Dorsolateral prefrontal cortex (tissue), 120 donors: ENCODE measurements at regions of chr11 and their contacts with region 1.

Region 1: DNA sequence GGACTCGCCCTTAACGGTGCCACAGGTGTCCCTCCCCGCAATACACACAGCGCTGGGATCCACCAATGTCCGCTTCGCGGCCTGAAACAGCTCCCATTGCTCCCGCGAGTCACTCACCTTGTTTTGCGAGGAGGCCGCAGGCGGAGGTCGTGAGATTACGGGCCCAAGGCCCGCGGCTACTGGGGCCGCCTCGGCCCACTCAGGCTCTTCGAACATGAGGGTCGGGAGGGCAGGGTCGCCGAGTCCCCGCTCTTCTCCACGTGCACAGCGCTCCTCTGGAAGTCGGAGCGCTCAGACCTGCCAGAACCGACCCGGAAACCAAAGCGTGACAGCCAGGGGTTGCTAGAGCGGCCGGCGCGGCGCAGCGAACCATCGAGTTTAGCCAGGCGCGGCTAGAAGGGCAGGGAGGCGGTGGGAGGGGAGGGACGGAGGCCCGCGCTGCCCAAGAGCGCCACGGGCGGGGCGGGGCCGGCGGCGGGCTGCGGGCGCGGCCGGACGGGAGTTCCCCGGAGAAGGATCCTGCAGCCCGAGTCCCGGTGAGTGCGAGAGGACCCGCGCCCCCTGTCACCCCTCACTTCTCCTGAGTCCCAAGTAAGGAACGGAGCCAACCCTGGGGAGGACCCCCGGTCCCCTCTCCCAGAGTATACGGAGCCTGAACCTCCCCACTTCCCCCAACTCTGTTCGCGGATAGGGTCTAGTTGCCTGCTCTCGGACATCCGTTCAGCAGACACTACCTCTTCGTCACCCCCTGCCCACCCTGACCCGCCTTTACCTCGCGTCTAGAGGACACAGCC is at the starts of genes ILK and RRP8:
- DNase-seq: peak; percentile 82 to 94 (median 90)
- H3K4me3 ChIP-seq: peak within 1 kb of the TSS; percentile 63 to 99 (median 90)
- H3K27ac ChIP-seq: peak within 1 kb of the TSS; percentile 6 to 97 (median 91)
- H3K27me3 ChIP-seq: no peaks in the 10 kb centered on the region
- CTCF ChIP-seq: peak in 53 of 56 donors; percentile 11 to 73 (median 53)
- total RNA-seq, gene ILK: 60.0 to 125 (median 89.3) TPM
- total RNA-seq, gene RRP8: 17.7 to 34.3 (median 24.3) TPM

Region 2: GRCh38 chr11:6419009-6419631 is 184.4 kb before region 1 on chr11 and contains the start of gene APBB1:
- intact Hi-C with region 1: loop called in 1 of 2 experiments (anchors 10 kb)
- DNase-seq: peak in 7 of 10 donors; percentile 57 to 87 (median 67)
- H3K4me3 ChIP-seq: peak within 1 kb of the TSS; percentile 69 to 100 (median 93)
- H3K27ac ChIP-seq: peak within 1 kb of the TSS; percentile 91 to 100 (median 98)
- H3K27me3 ChIP-seq: no peaks in the 10 kb centered on the region
- CTCF ChIP-seq: peak in 39 of 56 donors; percentile 7 to 53 (median 27)
- total RNA-seq, gene APBB1: 235 to 475 (median 368) TPM

Region 3: GRCh38 chr11:6481012-6481923 is 122.2 kb before region 1 on chr11 and contains the starts of genes ARFIP2 and TIMM10B:
- intact Hi-C with region 1: loop called in 1 of 2 experiments (anchors 5 kb)
- DNase-seq: peak; percentile 99 to 100 (median 100)
- H3K4me3 ChIP-seq: peak within 1 kb of the TSS; percentile 61 to 99 (median 88)
- H3K27ac ChIP-seq: peak within 1 kb of the TSS; percentile 11 to 96 (median 87)
- H3K27me3 ChIP-seq: no peaks in the 10 kb centered on the region
- CTCF ChIP-seq: peak in 27 of 56 donors; percentile 8 to 49 (median 28)
- total RNA-seq, gene ARFIP2: 36.5 to 66.3 (median 51.4) TPM
- total RNA-seq, gene TIMM10B: 39.2 to 73.5 (median 47.7) TPM

Region 4: DNA sequence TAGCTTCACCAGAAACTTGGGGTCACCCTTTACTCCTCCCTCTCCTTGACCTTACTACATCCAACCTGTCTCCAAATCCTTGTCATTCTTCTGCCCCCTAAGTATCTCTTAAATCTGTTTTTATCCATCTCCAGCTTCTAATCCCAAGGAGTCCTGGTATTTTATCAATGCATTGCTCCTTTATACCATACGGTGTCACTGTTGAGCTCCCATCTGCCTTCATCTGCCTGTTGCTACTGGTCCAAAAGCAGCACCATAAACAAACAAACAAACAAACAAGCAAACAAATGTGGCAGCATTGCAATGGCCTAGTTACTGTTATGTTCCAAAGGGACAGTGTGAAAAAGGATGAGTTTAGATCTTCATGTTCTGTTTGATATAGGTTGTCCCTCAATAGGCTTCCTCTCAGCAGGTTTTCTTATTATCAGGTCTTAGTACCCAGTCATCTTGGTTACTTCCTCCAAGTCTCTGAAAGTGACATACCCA is 72.2 kb before region 1 on chr11:
- intact Hi-C with region 1: loop called (anchors 2 to 5 kb)
- DNase-seq: peak in 1 of 10 donors; percentile 28
- H3K4me3 ChIP-seq: no peak overlapping the region
- H3K27ac ChIP-seq: peak overlapping the region in 4 of 59 donors; percentile 5 to 44 (median 18)
- H3K27me3 ChIP-seq: no peaks in the 10 kb centered on the region
- CTCF ChIP-seq: peak; percentile 59 to 91 (median 78)

Region 5: GRCh38 chr11:6576471-6577373 is 26.8 kb before region 1 on chr11:
- intact Hi-C with region 1: loop called in 1 of 2 experiments (anchors 2 kb)
- DNase-seq: peak in 8 of 10 donors; percentile 31 to 90 (median 76)
- H3K4me3 ChIP-seq: peak overlapping the region in 4 of 59 donors; percentile 3 to 17 (median 10)
- H3K27ac ChIP-seq: peak overlapping the region; percentile 29 to 90 (median 81)
- H3K27me3 ChIP-seq: no peaks in the 10 kb centered on the region
- CTCF ChIP-seq: peak in 4 of 56 donors; percentile 20 to 45 (median 26)

Region 6: DNA sequence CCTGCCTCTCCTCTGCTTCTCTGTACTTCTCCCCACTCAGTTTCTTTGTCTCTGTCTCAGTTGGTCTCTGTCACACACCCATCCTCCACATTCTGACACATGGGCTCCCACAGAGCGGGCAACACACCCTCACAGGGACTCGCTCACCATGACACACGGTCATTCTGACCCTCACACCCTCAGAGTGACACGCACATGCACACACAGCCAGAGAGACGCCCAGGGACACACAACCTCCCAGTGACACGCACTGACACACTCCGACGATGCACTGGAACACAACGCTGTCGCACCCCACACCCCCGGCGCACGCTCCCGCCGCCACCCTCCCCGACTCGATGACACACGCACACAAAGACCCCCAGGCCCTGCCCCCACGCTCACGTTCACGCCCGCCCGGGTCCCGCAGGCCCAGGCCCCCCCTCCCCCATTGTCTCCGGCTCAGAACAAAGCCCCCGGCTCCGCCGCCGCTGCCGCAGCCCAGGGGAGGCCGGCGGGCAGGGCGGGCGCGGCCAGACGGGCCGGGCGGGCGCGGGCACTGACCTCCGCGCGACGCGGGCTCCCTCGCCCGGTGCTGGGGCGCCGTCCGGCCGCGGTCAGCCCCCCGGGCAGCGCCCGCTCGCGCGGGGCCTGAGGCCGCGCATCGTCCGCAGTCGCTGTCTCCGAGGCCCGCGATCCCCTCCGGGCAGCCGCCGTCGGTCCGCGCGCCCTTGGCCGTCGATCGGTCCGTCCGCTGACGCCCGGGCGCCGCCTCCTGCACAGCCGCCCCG is 51.7 kb after region 1 on chr11:
- intact Hi-C with region 1: loop called in 1 of 2 experiments (anchors 10 kb)
- DNase-seq: peak in 3 of 10 donors; percentile 34 to 59 (median 54)
- H3K4me3 ChIP-seq: peak overlapping the region; percentile 24 to 75 (median 54)
- H3K27ac ChIP-seq: peak overlapping the region in 43 of 59 donors; percentile 7 to 82 (median 52)
- H3K27me3 ChIP-seq: no peaks in the 10 kb centered on the region
- CTCF ChIP-seq: no peak

Region 7: GRCh38 chr11:6682936-6683861 is 79.7 kb after region 1 on chr11 and contains the start of gene MRPL17:
- intact Hi-C with region 1: loop called (anchors 2 kb)
- DNase-seq: peak; percentile 94 to 98 (median 96)
- H3K4me3 ChIP-seq: peak within 1 kb of the TSS; percentile 65 to 100 (median 89)
- H3K27ac ChIP-seq: peak within 1 kb of the TSS; percentile 83 to 99 (median 96)
- H3K27me3 ChIP-seq: no peaks in the 10 kb centered on the region
- CTCF ChIP-seq: peak; percentile 88 to 100 (median 97)
- total RNA-seq, gene MRPL17: 17.2 to 43.4 (median 26.1) TPM